Activated CD8-positive, alpha-beta T cell treated with anti-CD3 and anti-CD28 coated beads for 36 hours (primary cell): ENCODE measurements at regions of chr1 and their contacts with region 1.

Region 1: GRCh38 chr1:15975805-15976680 is at the start of gene ZBTB17:
- DNase-seq: peak; percentile 98
- ATAC-seq: peak; percentile 84
- H3K4me3 Mint-ChIP-seq: peak within 1 kb of the TSS; percentile 85
- H3K27ac Mint-ChIP-seq: peak within 1 kb of the TSS; percentile 89
- H3K4me1 Mint-ChIP-seq: peaks cover 36% of the 10 kb centered on the region
- H3K27me3 Mint-ChIP-seq: no peaks in the 10 kb centered on the region
- CTCF ChIP-seq: no peak
- total RNA-seq, gene ZBTB17: 44.1 to 45.7 TPM

Region 2: GRCh38 chr1:15809788-15810065 is 166.3 kb before region 1 on chr1:
- CTCF ChIA-PET with region 1: no interaction called
- POLR2A ChIA-PET with region 1: no interaction called
- intact Hi-C with region 1: no loop called
- DNase-seq: no peak
- ATAC-seq: no peak
- H3K4me3 Mint-ChIP-seq: no peak overlapping the region
- H3K27ac Mint-ChIP-seq: no peak overlapping the region
- H3K4me1 Mint-ChIP-seq: no peaks in the 10 kb centered on the region
- H3K27me3 Mint-ChIP-seq: no peaks in the 10 kb centered on the region
- CTCF ChIP-seq: no peak

Region 3: GRCh38 chr1:15895233-15895632 is 80.8 kb before region 1 on chr1:
- CTCF ChIA-PET with region 1: no interaction called
- POLR2A ChIA-PET with region 1: no interaction called
- intact Hi-C with region 1: no loop called
- DNase-seq: no peak
- ATAC-seq: no peak
- H3K4me3 Mint-ChIP-seq: no peak overlapping the region
- H3K27ac Mint-ChIP-seq: no peak overlapping the region
- H3K4me1 Mint-ChIP-seq: peaks cover 45% of the 10 kb centered on the region
- H3K27me3 Mint-ChIP-seq: no peaks in the 10 kb centered on the region
- CTCF ChIP-seq: no peak

Region 4: DNA sequence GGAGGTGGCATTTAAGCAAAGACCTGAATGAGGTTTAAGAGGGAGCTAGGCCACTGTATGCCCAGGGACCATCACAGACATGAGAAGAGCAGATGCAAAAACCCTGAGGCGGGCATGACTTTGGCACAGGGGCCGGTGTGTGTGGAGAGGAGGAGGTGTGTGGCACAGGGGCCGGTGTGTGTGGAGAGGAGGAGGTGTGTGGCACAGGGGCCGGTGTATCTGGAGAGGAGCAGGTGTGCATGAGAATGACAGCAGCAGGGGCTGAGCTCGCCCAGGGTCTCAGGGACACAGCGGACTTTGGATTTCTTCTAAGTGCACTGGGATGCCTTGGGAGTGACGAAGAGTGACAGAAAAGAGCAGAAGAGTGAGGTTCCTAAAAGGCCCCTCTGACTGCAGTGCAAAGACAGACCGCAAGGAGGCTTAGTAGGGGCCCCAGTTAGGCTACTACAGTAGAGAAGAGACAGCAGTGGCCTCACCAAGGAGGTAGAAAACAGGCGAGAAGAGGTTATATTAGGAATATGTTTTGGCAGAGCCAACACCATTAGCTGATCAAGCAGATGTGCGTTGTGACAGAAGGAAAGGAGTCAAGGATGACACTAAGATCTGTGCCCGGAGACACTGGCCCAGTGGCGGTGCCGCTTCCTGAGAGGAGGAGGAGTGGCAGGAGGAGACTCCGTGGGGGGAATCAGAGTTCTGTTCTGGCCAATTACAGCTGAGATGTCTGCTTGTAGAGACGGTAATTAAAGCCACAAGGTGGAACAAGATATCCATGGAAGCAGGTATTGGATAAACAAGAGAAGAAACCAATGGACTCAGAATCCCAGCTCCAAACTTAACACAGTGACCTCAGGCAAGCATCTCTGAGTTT is 18.6 kb before region 1 on chr1:
- CTCF ChIA-PET with region 1: interaction called, 4 read pairs
- POLR2A ChIA-PET with region 1: interaction called, 69 read pairs
- intact Hi-C with region 1: no loop called
- DNase-seq: no peak
- ATAC-seq: no peak
- H3K4me3 Mint-ChIP-seq: no peak overlapping the region
- H3K27ac Mint-ChIP-seq: peak overlapping the region; percentile 92
- H3K4me1 Mint-ChIP-seq: peaks cover 90% of the 10 kb centered on the region
- H3K27me3 Mint-ChIP-seq: no peaks in the 10 kb centered on the region
- CTCF ChIP-seq: no peak